Aorta (tissue), 5 donors: ENCODE measurements at regions of chr11 and their contacts with region 1.

Region 1: GRCh38 chr11:26297189-26297975 is 34.5 kb upstream of the ANO3 start:
- DNase-seq: no peak
- ATAC-seq: peak; percentile 60
- H3K4me3 ChIP-seq: no peak overlapping the region
- H3K27ac ChIP-seq: no peak overlapping the region
- H3K4me1 ChIP-seq: no peaks in the 10 kb centered on the region
- H3K27me3 ChIP-seq: no peaks in the 10 kb centered on the region

Region 2: DNA sequence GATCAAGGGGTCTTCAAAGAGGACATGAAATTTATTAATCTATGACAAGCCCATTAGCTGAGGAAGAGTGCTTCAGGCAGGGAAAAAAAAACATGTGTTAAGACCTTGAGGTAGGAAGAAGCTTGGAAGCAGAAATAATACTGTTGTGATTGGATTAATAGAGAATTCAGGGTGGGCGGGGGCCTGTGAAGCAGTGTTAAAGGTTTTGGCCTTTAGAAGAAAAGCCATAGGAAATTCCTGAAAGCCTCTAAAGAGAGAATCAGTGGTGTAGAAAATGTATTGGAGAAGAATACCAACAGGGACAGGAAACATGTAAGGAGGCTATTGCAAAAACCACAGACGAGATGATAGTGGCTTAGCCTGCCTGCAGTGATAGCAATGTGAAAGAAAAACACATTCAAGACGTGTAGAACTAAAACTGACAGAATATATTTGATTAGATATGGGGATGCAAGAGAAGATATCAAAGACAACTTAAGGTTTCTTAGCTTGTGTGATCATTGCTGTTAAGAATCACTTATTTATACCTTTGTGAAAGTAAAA is 369.9 kb before region 1 on chr11:
- intact Hi-C with region 1: no loop called
- DNase-seq: no peak
- ATAC-seq: no peak
- H3K4me3 ChIP-seq: no peak overlapping the region
- H3K27ac ChIP-seq: no peak overlapping the region
- H3K4me1 ChIP-seq: no peaks in the 10 kb centered on the region
- H3K27me3 ChIP-seq: no peaks in the 10 kb centered on the region

Region 3: DNA sequence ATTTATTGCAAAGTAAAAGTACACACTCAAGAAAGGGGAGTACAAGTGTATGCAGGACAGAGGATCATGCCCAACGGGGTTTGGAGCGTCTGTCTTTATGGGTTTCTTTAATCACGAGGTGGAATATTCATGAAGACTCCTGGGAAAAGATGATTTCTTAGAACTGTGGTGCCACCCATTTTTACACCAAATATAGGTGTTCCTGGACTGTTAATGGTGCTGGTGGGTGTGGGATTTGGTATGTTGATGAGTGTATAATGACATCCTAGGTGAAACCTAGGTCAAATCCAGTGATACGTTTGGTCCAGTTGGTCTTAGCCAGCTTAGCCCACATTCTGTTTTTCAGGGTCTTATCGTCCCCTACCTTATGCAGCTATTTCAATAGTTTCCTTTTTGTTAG is 55.6 kb after region 1 on chr11:
- intact Hi-C with region 1: no loop called
- DNase-seq: no peak
- ATAC-seq: no peak
- H3K4me3 ChIP-seq: no peak overlapping the region
- H3K27ac ChIP-seq: no peak overlapping the region
- H3K4me1 ChIP-seq: no peaks in the 10 kb centered on the region
- H3K27me3 ChIP-seq: no peaks in the 10 kb centered on the region

Region 4: DNA sequence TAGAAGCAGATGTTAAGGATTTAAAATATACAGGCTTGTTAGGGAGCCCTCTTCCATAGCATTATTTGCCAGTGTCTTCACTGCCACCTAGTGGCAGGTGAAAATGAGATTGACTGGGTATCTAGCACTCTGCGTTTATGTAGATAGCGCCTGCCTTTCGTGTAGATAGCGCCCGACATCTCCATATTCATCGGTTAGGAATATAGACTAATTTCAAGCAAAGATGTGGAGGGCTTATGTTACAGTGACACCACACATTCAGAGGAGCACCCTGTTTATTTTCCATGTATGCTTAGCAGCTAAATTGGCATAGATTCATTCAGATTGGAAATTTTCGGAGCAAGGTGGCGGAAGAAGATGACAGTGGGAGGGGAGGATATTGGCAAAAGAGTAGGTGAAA is 352.5 kb after region 1 on chr11:
- intact Hi-C with region 1: loop called in 1 of 2 experiments (anchors 10 kb)
- DNase-seq: no peak
- ATAC-seq: peak; percentile 54
- H3K4me3 ChIP-seq: no peak overlapping the region
- H3K27ac ChIP-seq: no peak overlapping the region
- H3K4me1 ChIP-seq: no peaks in the 10 kb centered on the region
- H3K27me3 ChIP-seq: no peaks in the 10 kb centered on the region